Calu3 (cell line): ENCODE measurements at regions of chr12 and their contacts with region 1.

Region 1: DNA sequence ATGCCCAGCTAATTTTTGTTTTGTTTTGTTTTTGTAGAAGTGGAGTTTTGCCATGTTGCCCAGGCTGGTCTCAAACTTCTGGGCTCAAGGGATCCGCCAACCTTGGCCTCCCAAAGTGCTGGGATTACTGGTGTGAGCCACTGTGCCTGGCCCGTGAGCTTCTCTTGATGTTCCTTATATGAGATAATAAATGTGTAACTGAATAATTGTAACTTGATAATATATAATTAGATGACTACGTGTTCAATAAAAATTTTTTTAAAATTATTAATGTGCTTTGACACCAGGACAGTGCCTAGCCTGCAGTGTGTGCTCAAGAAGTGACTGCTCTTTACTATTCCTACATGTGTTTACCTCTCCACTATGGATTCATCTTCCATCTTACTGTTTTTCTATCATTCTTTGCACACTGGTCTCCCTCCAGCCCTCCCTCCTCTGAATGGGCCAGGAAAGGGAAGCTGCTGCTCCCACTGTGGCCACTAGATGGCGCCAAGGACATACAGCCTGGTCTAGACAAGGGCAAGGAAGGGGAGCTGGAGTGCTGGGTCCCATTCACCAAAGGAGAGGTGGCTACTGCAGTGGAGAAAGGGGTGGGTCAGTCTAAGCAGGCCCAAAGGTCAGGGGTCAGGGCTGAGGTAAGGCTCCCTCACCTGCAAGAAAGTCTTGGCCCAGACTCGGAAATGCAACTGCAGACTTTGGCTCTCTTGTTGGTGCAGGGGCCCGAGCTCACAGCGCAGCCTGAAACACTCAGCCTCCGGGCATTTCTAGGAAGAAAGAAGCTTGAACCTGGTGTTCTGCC is 14.7 kb upstream of the ZNF385A start:
- DNase-seq: peak; percentile 92
- H3K4me3 Mint-ChIP-seq: no peak overlapping the region
- H3K27ac Mint-ChIP-seq: no peak overlapping the region
- H3K4me1 Mint-ChIP-seq: no peaks in the 10 kb centered on the region
- H3K27me3 Mint-ChIP-seq: no peaks in the 10 kb centered on the region
- CTCF ChIP-seq: peak; percentile 95

Region 2: DNA sequence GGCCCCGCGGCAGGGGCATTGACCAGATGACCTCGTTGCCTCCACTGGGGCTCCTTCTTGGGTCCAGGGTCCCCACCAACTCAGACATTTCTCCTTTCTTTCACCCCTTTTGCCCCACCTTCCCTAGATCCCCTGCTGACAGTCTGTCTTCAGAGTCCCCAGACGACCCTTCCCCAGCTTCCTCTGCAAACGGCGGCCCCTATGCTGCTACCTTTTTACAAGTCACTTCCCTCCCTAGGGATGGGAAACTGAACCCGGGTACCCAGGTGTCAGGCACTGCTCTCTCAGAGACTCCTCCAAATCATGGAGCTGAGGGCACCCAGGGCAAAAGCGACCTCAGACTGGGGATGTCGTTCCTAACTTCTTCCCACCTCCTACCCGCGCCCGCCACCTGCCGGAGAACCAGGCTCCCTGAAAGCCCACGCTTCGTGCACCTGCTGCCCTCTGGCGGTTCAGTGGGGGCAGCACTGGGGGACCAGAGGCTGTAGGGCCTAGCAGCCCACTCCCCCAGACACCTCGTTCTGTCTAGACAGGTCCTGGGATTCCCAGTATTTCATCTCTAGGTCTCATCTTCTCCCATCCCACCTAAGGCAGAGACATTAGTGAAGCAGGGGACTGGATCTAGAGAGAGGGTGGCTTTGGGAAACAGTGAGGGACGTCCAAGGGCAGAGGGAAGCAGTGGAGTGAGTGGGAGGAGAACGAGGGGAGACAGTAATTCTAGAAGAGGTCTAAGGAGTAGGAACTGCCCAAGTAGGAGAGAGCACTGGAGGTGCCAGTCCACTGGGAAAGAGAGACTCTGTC is 19.6 kb before region 1 on chr12:
- CTCF ChIA-PET with region 1: interaction called, 14 read pairs
- intact Hi-C with region 1: no loop called
- DNase-seq: peak; percentile 98
- H3K4me3 Mint-ChIP-seq: peak overlapping the region; percentile 73
- H3K27ac Mint-ChIP-seq: no peak overlapping the region
- H3K4me1 Mint-ChIP-seq: peaks cover 25% of the 10 kb centered on the region
- H3K27me3 Mint-ChIP-seq: no peaks in the 10 kb centered on the region
- CTCF ChIP-seq: peak; percentile 100

Region 3: GRCh38 chr12:54439521-54440255 is 40.5 kb after region 1 on chr12:
- CTCF ChIA-PET with region 1: interaction called, 145 read pairs
- intact Hi-C with region 1: loop called (anchors 1 kb)
- DNase-seq: no peak
- H3K4me3 Mint-ChIP-seq: no peak overlapping the region
- H3K27ac Mint-ChIP-seq: no peak overlapping the region
- H3K4me1 Mint-ChIP-seq: no peaks in the 10 kb centered on the region
- H3K27me3 Mint-ChIP-seq: peaks cover 65% of the 10 kb centered on the region
- CTCF ChIP-seq: peak; percentile 74